Activated CD8-positive, alpha-beta T cell treated with anti-CD3 and anti-CD28 coated beads for 36 hours (primary cell): ENCODE measurements at regions of chr17 and their contacts with region 1.

Region 1: GRCh38 chr17:29116804-29117772 is 63.1 kb downstream of the MYO18A start:
- DNase-seq: peak; percentile 87
- ATAC-seq: peak; percentile 87
- H3K4me3 Mint-ChIP-seq: no peak overlapping the region
- H3K27ac Mint-ChIP-seq: peak overlapping the region; percentile 34
- H3K4me1 Mint-ChIP-seq: peaks cover 11% of the 10 kb centered on the region
- H3K27me3 Mint-ChIP-seq: no peaks in the 10 kb centered on the region
- CTCF ChIP-seq: peak; percentile 97

Region 2: DNA sequence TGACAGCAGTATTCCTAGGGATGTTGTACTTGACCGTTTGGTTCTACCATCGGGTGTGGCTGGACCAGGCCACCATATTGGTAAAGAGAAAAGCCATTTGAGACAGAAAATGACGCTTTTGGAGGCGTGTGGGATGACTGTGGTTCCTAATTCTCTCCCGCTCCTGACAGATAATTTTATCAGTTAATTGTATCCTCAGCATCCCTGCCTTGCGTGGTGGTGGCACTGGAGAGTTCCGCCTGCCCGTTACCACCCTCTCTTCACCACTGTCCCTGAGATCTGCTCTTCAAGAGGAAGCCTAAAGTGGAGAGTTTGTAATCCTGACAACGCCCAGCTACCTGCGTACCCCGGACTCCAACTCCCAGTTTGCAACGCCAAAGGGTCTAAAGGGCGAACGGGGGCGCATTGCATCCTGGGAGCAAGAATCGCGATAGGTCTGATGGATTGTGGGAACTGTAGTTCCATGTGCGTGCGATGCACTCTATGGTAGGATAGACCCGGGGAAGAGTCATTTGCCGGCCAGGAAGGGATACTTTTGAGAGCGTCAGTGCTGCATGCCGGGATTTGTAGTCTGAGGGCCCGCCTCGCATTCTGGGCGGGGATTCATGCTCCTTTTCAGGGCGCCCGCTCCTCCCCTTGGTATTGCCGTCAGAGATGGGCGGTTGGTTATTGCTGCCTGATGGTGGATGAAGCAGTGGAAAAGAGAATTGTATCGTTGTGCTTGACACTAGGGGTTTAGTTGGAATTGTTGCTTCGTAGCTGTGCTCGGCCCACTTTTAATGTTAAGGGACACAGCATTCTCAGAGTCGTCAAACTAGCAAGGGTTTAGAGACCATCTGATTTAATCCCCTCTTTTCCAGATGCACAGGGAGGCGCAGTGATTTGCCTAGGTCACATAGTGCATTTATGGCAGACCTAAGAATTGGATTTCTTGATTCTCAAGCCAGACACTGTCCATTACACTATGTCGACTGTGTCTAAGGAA is 164.8 kb before region 1 on chr17:
- CTCF ChIA-PET with region 1: interaction called, 20 read pairs
- POLR2A ChIA-PET with region 1: no interaction called
- intact Hi-C with region 1: no loop called
- DNase-seq: peak; percentile 98
- ATAC-seq: peak; percentile 75
- H3K4me3 Mint-ChIP-seq: no peak overlapping the region
- H3K27ac Mint-ChIP-seq: no peak overlapping the region
- H3K4me1 Mint-ChIP-seq: peaks cover 15% of the 10 kb centered on the region
- H3K27me3 Mint-ChIP-seq: no peaks in the 10 kb centered on the region
- CTCF ChIP-seq: no peak

Region 3: GRCh38 chr17:28982131-28982951 is 134.7 kb before region 1 on chr17:
- CTCF ChIA-PET with region 1: interaction called, 18 read pairs
- POLR2A ChIA-PET with region 1: no interaction called
- intact Hi-C with region 1: no loop called
- DNase-seq: peak; percentile 79
- ATAC-seq: peak; percentile 91
- H3K4me3 Mint-ChIP-seq: no peak overlapping the region
- H3K27ac Mint-ChIP-seq: peak overlapping the region; percentile 94
- H3K4me1 Mint-ChIP-seq: peaks cover 22% of the 10 kb centered on the region
- H3K27me3 Mint-ChIP-seq: no peaks in the 10 kb centered on the region
- CTCF ChIP-seq: no peak

Region 4: GRCh38 chr17:29032857-29033197 is 84.3 kb before region 1 on chr17:
- CTCF ChIA-PET with region 1: interaction called, 19 read pairs
- POLR2A ChIA-PET with region 1: no interaction called
- intact Hi-C with region 1: no loop called
- DNase-seq: no peak
- ATAC-seq: no peak
- H3K4me3 Mint-ChIP-seq: no peak overlapping the region
- H3K27ac Mint-ChIP-seq: no peak overlapping the region
- H3K4me1 Mint-ChIP-seq: no peaks in the 10 kb centered on the region
- H3K27me3 Mint-ChIP-seq: peaks cover 32% of the 10 kb centered on the region
- CTCF ChIP-seq: no peak

Region 5: DNA sequence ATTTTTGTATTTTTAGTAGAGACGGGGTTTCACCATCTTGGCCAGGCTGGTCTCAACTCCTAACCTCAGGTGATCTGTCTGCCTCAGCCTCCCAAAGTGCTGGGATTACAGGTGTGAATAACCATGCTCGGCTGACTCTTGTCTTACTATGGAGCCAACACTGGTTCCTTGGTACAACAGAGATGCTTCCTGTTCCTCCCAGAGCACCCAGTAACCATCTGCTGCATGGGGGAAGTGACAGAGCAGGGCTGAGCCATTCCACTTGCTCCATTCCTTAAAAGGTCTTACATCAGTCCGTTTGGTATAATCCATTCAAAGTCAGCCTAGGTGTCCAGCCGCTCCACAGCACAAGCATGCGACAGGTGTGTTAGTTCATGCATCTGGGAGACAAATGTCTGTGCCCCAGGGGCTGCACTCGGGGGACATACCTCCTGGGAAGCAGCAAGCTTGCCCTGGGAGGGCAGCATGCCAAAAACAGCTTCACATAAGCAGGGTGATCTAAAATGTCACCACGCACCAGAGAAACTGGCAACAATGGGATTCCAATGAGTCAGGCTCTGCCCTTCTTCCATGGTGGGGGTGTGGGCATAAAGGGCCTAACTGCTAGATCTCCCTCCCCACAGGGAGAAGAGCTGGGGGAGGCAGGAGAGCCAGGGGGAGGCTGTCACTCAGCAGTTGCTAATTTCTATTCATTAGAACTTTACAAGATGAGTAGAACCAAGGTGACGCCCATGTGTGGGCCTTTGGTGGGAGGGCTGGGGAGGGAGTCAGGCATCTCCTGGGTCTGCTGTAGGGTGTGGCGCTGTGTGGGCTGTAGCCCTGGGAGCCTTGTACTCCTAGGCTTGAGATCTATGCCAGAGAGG is 38.7 kb before region 1 on chr17:
- CTCF ChIA-PET with region 1: interaction called, 12 read pairs
- POLR2A ChIA-PET with region 1: no interaction called
- intact Hi-C with region 1: no loop called
- DNase-seq: no peak
- ATAC-seq: no peak
- H3K4me3 Mint-ChIP-seq: no peak overlapping the region
- H3K27ac Mint-ChIP-seq: no peak overlapping the region
- H3K4me1 Mint-ChIP-seq: no peaks in the 10 kb centered on the region
- H3K27me3 Mint-ChIP-seq: no peaks in the 10 kb centered on the region
- CTCF ChIP-seq: no peak

Region 6: DNA sequence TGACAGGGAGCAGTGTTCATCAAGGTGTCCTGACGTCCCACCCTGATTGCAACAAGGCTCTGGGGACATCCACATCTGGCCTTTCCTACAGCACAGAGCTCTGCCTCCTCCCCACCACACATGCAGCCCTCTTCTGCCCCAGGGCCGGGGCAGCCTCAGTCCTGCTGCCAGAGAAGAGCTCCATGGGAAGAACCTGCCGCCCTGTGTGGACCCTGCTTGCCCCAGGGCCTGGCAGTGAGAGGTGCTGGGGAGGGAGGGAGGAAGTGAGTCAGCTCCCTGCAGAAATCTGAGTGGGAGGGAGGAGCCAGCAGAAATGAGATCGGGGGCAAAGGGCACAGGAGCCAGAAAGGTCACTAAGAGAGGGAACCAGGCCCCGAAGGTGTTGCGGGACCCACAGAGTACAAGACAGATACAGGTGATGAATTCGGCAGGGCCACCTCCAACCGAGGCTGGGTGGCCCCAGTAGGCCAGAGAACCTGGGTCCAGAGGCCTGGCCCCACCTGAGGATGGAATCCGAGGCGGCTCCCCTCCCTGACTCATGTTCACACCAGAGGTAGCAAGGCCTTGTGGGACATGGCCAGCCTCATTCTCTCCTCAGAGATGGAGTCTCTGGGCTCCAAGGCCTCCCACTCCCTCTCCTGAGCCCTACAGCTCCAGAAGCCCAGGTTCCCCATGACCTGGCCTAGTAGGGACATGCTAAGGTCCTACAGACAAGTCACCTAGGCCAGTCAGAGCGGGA is 38.3 kb after region 1 on chr17:
- CTCF ChIA-PET with region 1: interaction called, 609 read pairs
- POLR2A ChIA-PET with region 1: no interaction called
- intact Hi-C with region 1: no loop called
- DNase-seq: peak; percentile 88
- ATAC-seq: peak; percentile 98
- H3K4me3 Mint-ChIP-seq: peak overlapping the region; percentile 29
- H3K27ac Mint-ChIP-seq: peak overlapping the region; percentile 85
- H3K4me1 Mint-ChIP-seq: peaks cover 48% of the 10 kb centered on the region
- H3K27me3 Mint-ChIP-seq: no peaks in the 10 kb centered on the region
- CTCF ChIP-seq: no peak

Region 7: DNA sequence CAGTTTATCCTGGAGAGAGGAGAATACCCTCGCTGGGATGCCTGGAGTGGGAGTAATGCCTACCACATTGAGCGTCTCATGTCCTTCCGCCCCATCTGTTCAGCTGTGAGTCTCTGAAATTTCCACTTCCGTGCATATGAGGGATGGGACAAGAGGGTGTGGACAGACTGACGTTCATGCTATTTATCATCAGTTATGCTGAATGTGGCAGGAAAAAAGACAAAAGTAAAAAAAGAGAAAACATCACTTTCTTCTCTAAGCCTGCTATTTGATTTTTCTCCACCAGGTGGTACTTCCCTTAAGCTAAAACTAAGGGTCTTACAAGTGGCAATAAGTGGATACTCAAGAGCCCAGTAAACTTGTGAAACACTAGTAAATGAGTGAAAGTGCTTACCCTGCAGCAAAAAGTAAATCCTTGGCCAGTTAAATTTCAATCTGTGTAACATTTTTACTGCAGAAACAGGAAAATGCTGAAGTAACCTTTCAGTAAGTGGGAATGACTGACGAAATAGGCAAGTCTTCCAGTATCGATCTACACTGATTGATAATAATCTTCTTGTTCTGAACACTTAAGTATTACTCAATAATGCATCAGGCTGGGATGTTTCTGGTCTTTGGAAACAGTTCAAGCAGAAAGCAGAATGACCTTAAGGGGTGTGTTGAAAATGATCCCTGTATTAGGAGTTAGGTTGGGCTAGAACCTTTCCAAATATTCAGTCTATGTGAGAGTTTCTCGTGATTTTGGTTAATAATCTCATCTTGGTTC is 135.2 kb after region 1 on chr17:
- CTCF ChIA-PET with region 1: interaction called, 12 read pairs
- POLR2A ChIA-PET with region 1: no interaction called
- intact Hi-C with region 1: no loop called
- DNase-seq: no peak
- ATAC-seq: no peak
- H3K4me3 Mint-ChIP-seq: no peak overlapping the region
- H3K27ac Mint-ChIP-seq: no peak overlapping the region
- H3K4me1 Mint-ChIP-seq: peaks cover 7% of the 10 kb centered on the region
- H3K27me3 Mint-ChIP-seq: no peaks in the 10 kb centered on the region
- CTCF ChIP-seq: peak; percentile 32